Activated CD4-positive, alpha-beta memory T cell treated with anti-CD3 and anti-CD28 coated beads for 36 hours (primary cell): ENCODE measurements at regions of chr7 and their contacts with region 1.

Region 1: DNA sequence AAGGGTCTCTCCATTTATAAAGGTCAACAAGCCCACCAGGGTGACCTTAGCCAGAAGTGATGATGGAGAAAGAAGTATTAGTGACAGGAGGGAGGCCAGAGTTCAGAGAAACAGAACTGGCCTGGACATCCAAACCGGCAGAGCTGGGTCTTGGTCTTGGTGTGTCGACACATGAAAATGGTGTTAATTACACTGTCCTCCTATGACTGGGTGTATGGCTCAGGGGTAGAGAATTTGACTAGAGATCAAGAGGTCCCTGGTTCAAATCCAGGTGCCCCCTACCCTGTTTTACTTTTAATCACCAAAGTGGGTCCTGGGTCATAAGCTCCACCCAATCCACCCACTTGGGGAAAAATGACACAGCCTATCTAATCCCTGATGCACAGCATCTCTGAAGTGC is 110.6 kb upstream of the ZNF746 start:
- DNase-seq: no peak
- H3K4me3 Mint-ChIP-seq: no peak overlapping the region
- H3K27ac Mint-ChIP-seq: no peak overlapping the region
- H3K4me1 Mint-ChIP-seq: no peaks in the 10 kb centered on the region
- H3K27me3 Mint-ChIP-seq: no peaks in the 10 kb centered on the region

Region 2: DNA sequence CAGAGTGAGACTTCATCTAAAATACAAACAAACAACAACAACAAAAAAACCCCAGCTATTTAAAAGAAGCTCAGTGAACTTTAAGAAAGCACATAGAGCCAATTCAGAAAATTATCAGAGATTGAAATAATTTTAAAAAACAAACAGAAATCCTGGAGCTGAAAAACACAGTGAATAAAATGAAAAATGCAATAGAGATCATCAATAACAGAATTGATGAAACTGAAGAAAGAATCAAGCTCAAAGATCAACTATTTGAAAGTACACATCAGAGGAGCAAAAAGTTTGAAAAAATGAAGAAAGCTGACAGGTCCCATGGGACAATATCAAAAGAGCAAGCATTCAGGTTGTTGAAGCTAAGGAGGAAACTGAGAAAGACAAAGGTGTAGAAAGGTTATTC is 98.4 kb before region 1 on chr7:
- CTCF ChIA-PET with region 1: no interaction called
- POLR2A ChIA-PET with region 1: no interaction called
- intact Hi-C with region 1: no loop called
- DNase-seq: no peak
- H3K4me3 Mint-ChIP-seq: no peak overlapping the region
- H3K27ac Mint-ChIP-seq: no peak overlapping the region
- H3K4me1 Mint-ChIP-seq: no peaks in the 10 kb centered on the region
- H3K27me3 Mint-ChIP-seq: peaks cover 1% of the 10 kb centered on the region

Region 3: DNA sequence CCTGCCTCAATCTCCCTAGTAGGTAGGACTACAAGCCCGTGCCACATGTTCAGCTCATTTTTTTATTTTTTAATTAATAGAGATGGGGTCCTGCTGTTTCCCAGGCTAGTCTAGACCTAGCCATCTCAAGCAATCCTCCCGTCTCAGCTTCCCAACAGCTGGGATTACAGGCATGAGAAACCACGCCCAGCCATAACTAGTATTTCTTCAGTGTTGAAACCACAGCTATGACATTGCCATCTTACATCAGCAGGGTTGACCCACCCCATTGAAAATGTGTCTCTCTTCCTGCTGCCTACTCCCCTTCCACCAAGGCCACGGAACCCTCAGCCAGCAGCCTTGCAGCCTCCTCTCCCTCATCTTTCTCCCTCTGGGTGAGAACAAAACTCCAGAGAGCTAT is 48.5 kb before region 1 on chr7:
- CTCF ChIA-PET with region 1: no interaction called
- POLR2A ChIA-PET with region 1: no interaction called
- intact Hi-C with region 1: no loop called
- DNase-seq: no peak
- H3K4me3 Mint-ChIP-seq: no peak overlapping the region
- H3K27ac Mint-ChIP-seq: no peak overlapping the region
- H3K4me1 Mint-ChIP-seq: peaks cover 2% of the 10 kb centered on the region
- H3K27me3 Mint-ChIP-seq: no peaks in the 10 kb centered on the region

Region 4: GRCh38 chr7:149586646-149587332 is 21.4 kb before region 1 on chr7:
- CTCF ChIA-PET with region 1: no interaction called
- POLR2A ChIA-PET with region 1: no interaction called
- intact Hi-C with region 1: loop called (anchors 1 kb)
- DNase-seq: no peak
- H3K4me3 Mint-ChIP-seq: no peak overlapping the region
- H3K27ac Mint-ChIP-seq: no peak overlapping the region
- H3K4me1 Mint-ChIP-seq: peaks cover 10% of the 10 kb centered on the region
- H3K27me3 Mint-ChIP-seq: no peaks in the 10 kb centered on the region

Region 5: GRCh38 chr7:149642589-149642988 is 34.4 kb after region 1 on chr7:
- CTCF ChIA-PET with region 1: no interaction called
- POLR2A ChIA-PET with region 1: no interaction called
- intact Hi-C with region 1: no loop called
- DNase-seq: no peak
- H3K4me3 Mint-ChIP-seq: no peak overlapping the region
- H3K27ac Mint-ChIP-seq: no peak overlapping the region
- H3K4me1 Mint-ChIP-seq: no peaks in the 10 kb centered on the region
- H3K27me3 Mint-ChIP-seq: peaks cover 16% of the 10 kb centered on the region